Activated CD8-positive, alpha-beta memory T cell treated with anti-CD3 and anti-CD28 coated beads, Interleukin-2, amount 10 ng/mL, durations not matched to agents 7 days and 5 days (primary cell): ENCODE measurements at regions of chr12 and their contacts with region 1.

Region 1: GRCh38 chr12:7108796-7109571 is at the start of gene C1RL:
- DNase-seq: peak; percentile 87
- ATAC-seq: peak; percentile 21
- H3K4me3 Mint-ChIP-seq: peak within 1 kb of the TSS; percentile 99
- H3K27ac Mint-ChIP-seq: peak within 1 kb of the TSS; percentile 97
- H3K4me1 Mint-ChIP-seq: peaks cover 52% of the 10 kb centered on the region
- H3K27me3 Mint-ChIP-seq: no peaks in the 10 kb centered on the region
- total RNA-seq, gene C1RL: 21.8 to 27.4 TPM

Region 2: GRCh38 chr12:6927379-6928024 is 181.5 kb before region 1 on chr12 and contains the start of gene ATN1:
- CTCF ChIA-PET with region 1: interaction called, 28 read pairs
- DNase-seq: peak; percentile 61
- ATAC-seq: peak; percentile 45
- H3K4me3 Mint-ChIP-seq: peak within 1 kb of the TSS; percentile 82
- H3K27ac Mint-ChIP-seq: peak within 1 kb of the TSS; percentile 89
- H3K4me1 Mint-ChIP-seq: peaks cover 60% of the 10 kb centered on the region
- H3K27me3 Mint-ChIP-seq: no peaks in the 10 kb centered on the region
- total RNA-seq, gene ATN1: 38.3 to 40.1 TPM

Region 3: GRCh38 chr12:6953442-6954315 is 155.3 kb before region 1 on chr12:
- CTCF ChIA-PET with region 1: interaction called, 14 read pairs
- DNase-seq: peak; percentile 91
- ATAC-seq: peak; percentile 31
- H3K4me3 Mint-ChIP-seq: peak overlapping the region; percentile 93
- H3K27ac Mint-ChIP-seq: peak overlapping the region; percentile 96
- H3K4me1 Mint-ChIP-seq: peaks cover 79% of the 10 kb centered on the region
- H3K27me3 Mint-ChIP-seq: no peaks in the 10 kb centered on the region

Region 4: DNA sequence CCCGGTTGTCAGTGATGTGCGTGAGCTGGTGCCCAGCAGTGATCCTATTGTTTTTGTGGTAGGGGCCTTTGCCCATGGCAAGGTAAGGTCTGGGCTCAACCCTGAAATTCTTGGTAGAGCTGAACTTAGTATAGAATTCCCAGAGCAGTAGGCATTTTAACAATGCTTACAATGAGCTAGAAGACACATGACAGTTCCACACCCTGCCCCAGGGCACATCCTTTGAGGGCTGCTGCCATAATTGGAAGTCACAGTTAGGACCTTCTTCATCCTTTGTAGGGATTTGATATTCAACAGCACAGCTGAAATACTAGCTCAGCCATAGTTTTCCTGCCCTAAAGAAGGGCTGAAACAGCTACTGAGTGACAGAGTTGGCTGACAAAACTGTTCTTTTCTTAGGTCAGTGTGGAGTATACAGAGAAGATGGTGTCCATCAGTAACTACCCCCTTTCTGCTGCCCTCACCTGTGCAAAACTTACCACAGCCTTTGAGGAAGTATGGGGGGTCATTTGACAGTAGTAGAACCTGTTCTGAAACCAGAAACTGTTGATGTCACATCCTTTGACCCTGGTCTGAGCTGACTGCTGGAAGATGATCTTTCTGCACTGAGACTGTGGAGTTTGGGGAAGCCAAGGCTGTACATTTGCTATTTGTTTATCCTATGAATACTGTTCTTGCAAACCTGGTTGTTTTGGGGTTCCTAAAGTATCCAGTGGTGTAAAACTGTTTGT is 133.5 kb before region 1 on chr12:
- CTCF ChIA-PET with region 1: interaction called, 14 read pairs
- DNase-seq: no peak
- ATAC-seq: no peak
- H3K4me3 Mint-ChIP-seq: no peak overlapping the region
- H3K27ac Mint-ChIP-seq: peak overlapping the region; percentile 45
- H3K4me1 Mint-ChIP-seq: peaks cover 46% of the 10 kb centered on the region
- H3K27me3 Mint-ChIP-seq: no peaks in the 10 kb centered on the region

Region 5: DNA sequence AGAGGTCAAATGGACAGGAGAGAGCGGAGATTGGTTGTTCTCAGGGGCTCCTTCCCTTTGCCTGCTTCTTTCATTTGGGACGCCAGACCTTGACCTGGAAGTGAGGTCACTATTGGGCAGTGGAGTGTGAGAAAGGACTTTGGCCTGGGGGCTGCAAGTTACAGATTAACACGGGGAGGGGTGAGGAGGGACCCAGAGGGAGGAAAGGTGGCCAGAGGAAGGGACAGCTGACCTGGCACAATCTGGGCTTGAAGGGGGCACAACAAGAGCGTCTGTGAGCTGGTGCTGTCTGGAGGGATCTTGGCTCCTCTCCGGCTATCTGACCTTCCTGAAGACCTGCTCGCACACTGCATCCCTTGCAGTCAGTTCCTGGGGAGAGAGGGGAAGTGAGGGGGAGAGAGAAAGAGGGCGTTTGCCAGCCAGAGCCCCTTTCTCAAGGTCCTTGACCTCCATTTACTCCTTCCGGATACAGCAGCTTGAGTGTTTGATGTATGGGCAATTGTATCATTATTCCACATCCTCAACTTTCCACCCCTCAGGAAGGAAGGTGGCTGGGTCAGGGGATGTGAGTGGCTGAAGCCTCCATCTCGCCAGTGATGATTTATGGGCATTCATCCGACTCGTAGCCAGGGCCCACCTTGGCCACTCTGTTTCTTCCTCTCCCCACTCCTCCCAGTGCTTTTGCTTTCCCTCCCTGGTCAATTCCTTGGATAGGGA is 15.0 kb after region 1 on chr12:
- CTCF ChIA-PET with region 1: interaction called, 13 read pairs
- DNase-seq: no peak
- ATAC-seq: no peak
- H3K4me3 Mint-ChIP-seq: no peak overlapping the region
- H3K27ac Mint-ChIP-seq: no peak overlapping the region
- H3K4me1 Mint-ChIP-seq: peaks cover 5% of the 10 kb centered on the region
- H3K27me3 Mint-ChIP-seq: no peaks in the 10 kb centered on the region

Region 6: DNA sequence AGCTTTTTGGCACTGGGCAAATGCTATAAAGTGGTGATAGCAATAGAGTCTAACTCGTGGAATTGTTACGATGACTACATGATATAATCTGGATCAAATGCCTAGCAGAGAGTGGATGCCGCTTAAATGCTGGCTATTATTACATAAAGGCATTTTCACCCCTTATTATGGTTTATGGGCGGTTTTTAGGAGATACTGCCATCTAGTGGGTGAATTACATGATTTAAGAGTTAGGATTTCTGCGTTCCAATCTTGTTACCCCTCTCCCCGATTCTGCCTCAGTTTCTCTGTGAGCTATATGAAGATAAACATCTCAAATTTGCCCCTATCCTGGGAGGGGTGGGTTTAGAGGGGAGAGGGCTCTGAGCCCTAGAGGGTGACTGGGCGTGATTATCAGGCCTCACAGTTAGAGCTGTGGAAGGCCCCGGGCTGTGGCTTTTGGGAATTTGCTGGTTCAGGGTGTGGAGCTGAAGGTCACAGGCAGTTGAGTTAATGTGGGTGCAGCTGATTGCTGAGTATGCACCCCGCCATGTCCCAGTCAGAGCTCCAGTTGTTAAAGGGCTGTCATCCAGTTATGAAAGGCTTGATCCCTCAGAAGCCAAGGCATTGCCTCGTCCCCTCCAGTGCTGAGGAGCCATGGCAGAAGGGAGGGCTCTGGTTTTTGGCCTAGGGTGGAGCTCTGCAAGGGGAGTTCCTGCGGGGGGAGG is 35.6 kb after region 1 on chr12:
- CTCF ChIA-PET with region 1: interaction called, 17 read pairs
- DNase-seq: no peak
- ATAC-seq: peak; percentile 60
- H3K4me3 Mint-ChIP-seq: no peak overlapping the region
- H3K27ac Mint-ChIP-seq: no peak overlapping the region
- H3K4me1 Mint-ChIP-seq: peaks cover 16% of the 10 kb centered on the region
- H3K27me3 Mint-ChIP-seq: no peaks in the 10 kb centered on the region

Region 7: GRCh38 chr12:7241404-7242005 is 132.5 kb after region 1 on chr12:
- CTCF ChIA-PET with region 1: no interaction called
- DNase-seq: no peak
- ATAC-seq: no peak
- H3K4me3 Mint-ChIP-seq: no peak overlapping the region
- H3K27ac Mint-ChIP-seq: no peak overlapping the region
- H3K4me1 Mint-ChIP-seq: peaks cover 6% of the 10 kb centered on the region
- H3K27me3 Mint-ChIP-seq: peaks cover 38% of the 10 kb centered on the region